ENCODE measurements at regions of chr22 and their contacts with region 1.

Region 1: DNA sequence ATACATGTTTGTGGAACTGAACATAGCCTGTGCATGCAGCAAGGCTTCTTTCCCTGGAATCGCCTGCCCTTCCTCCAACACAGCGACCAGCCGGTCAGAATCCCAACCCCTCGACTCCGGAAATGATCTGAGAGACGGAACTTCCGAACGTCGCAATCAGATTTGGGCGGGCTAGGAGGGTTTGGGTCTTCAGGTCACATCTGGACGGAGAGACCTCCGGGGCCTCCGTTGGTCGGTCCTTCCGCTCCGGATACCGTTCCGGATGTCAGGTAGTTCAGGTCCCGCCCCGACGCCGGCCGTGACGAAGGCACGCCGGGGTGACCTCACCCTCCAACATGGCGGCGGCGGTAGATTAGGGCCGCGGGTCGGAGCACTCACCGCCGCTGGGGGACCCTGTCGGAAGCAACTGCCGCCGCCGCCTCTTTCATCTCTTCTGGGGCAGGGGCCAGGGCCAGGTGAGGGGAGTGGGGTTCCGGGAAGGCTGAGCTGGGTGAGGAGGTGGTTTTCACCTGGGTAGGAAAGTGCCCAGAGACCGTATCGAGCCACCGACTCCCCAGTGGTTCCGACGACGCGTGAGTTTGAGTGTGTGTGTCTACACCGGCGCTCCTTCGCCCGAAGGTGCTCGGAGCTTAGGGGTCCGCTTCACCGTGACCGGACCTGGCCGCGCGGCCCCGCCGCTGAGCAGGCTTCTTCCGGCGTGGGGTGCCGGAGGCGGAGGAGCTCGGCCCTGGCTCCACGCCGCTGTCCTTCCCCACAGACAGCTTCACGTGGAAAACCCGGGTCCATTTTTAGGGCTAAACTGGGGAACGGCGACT is at the start of gene BCL2L13:
- H3K4me3 ChIP-seq: peak within 1 kb of the TSS; percentile 90
- H3K27ac ChIP-seq: peak within 1 kb of the TSS; percentile 87
- H3K4me1 ChIP-seq: 0 out of 2 replicates have a peak, but pooled peaks cover 2% of the 10 kb centered on the region
- CTCF ChIP-seq: peak; percentile 60

Region 2: DNA sequence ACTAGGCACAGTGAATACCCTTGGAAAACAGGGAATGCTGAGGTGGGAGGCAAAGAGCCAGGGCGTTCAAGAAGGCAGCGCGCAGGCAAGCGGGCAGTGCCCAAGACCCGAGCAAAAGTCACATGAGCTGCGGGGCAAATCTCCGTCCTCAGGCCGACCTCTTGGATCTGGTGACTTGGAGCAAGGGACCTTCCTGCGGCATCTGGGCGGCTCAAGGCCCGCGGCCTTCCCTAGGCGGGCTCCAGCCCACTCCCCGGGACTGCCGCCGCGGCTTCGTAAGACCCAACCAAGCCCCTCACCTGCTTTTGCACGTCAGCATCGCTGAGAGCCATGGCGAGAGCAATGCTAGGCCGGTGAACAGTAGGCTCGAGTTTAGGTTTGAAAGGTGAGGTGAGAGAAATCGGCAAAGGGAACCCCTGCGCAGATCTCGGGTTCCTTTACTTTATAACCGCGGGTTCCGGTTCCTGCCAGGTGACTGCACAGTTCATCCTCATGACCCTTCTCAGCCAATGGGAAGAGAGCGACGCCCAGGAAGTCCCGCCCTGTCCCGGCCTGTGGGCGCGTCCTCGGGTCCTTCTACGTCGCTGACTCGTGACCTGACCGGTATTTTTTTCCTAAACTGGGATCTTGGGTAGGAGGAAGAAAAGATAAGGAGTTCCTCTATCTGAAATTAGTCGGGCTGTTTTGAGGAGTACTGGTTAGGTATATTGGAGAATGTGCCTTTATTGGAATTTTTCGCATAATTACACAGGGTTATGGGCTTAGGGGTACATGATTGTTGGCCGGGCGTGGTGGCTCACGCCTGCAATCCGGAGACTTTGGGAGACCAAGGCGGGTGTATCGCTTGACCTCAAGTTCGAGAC is 10.1 kb before region 1 on chr22 and contains the start of gene ATP6V1E1:
- CTCF ChIA-PET with region 1: no interaction called
- POLR2A ChIA-PET with region 1: interaction called, 10 read pairs
- H3K4me3 ChIP-seq: peak within 1 kb of the TSS; percentile 80
- H3K27ac ChIP-seq: peak within 1 kb of the TSS; percentile 86
- H3K4me1 ChIP-seq: peaks cover 7% of the 10 kb centered on the region
- CTCF ChIP-seq: no peak

Region 3: DNA sequence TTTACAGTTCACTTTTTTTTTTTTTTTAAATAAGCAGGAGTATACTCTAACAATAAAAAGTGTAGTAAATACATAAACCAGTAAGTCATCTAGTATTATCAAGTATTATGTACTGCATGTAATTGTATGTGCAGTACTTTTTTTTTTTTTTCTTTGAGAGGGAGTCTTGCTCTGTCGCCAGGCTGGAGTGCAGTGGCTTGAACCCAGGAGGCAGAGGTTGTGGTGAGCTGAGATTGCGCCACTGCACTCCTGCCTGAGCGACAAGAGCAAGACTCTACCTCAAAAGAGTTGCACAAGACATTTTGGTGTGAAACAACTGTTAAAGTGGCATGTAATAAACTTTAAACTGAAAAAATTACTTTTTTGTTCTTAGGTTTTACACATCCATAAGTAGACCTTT is 16.6 kb after region 1 on chr22:
- CTCF ChIA-PET with region 1: no interaction called
- POLR2A ChIA-PET with region 1: no interaction called
- H3K4me3 ChIP-seq: no peak overlapping the region
- H3K27ac ChIP-seq: no peak overlapping the region
- H3K4me1 ChIP-seq: no peaks in the 10 kb centered on the region
- CTCF ChIP-seq: no peak

Region 4: DNA sequence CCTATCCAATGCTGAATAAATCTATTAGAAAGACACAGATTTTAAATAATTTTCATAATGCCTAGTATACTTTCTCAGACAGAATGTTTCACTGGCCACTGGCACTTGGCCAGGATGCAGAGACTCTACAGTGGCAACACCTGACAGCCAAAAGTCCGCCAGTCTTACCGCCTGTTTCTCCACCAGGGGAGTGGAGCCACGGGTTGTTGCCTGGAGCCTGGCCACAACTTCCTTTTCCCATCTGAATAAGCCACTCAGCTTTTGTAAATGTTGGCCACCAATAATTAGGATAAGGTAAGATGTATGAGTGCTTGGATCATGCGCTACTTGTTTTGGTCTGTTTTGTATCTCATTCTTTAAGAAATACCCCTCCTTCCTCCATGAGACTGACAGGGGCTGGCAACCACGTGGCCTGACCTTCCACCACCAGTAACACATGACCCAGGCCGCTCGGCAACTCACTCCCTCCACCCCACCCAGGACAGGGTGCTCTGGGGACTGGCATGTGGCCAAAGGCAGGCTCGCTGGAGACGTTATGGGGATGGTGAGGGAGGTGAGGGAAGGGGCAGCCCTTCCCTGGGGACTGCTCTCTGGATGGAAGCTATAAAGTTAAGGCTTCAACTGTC is 228.6 kb after region 1 on chr22:
- CTCF ChIA-PET with region 1: no interaction called
- POLR2A ChIA-PET with region 1: no interaction called
- H3K4me3 ChIP-seq: no peak overlapping the region
- H3K27ac ChIP-seq: no peak overlapping the region
- H3K4me1 ChIP-seq: 0 out of 2 replicates have a peak, but pooled peaks cover 3% of the 10 kb centered on the region
- CTCF ChIP-seq: no peak

Measured in HEK293 (cell line).